GM12878 (cell line): ENCODE measurements at regions of chr1 and their contacts with region 1.

Region 1: GRCh38 chr1:113898241-113898814 is 6.3 kb downstream of the AP4B1 start:
- DNase-seq: no peak
- ATAC-seq: no peak; the same call in 2 of the 3 replicates
- H3K4me3 ChIP-seq: no peak overlapping the region
- H3K27ac ChIP-seq: no peak overlapping the region
- H3K4me1 ChIP-seq: no peaks in the 10 kb centered on the region
- H3K27me3 ChIP-seq: no peaks in the 10 kb centered on the region
- CTCF ChIP-seq: no peak
- EP300 ChIP-seq: no peak
- POLR2A ChIP-seq: no peak
- RAD21 ChIP-seq: no peak

Region 2: DNA sequence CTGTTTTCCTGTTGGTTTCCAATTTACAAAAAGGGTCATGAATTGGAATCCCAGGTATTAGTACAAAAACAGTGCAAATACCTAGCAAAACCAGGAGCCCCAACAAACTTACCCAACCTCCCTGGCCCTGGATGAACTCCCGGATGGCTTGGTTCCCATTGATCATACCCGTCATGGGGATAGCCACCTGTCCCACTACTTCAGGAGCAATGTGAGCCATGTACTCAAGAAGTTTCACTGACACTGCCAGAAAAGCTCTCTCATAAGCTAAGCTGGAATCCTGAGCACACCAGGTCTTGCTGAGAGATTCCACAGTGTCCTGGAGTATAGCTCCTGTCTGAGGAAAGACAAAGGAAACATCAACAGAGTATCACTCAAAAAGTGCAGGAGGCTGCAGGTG is 16.7 kb before region 1 on chr1:
- CTCF ChIA-PET with region 1: interaction called, 51 read pairs
- POLR2A ChIA-PET with region 1: interaction called, 29 read pairs
- RAD21 ChIA-PET with region 1: interaction called, 94 read pairs
- SMC1A ChIA-PET with region 1: interaction called, 205 read pairs
- in situ Hi-C with region 1: no loop called
- intact Hi-C with region 1: no loop called
- DNase-seq: no peak
- ATAC-seq: no peak
- H3K4me3 ChIP-seq: no peak overlapping the region
- H3K27ac ChIP-seq: peak overlapping the region; percentile 40
- H3K4me1 ChIP-seq: peaks cover 28% of the 10 kb centered on the region
- H3K27me3 ChIP-seq: no peaks in the 10 kb centered on the region
- CTCF ChIP-seq: no peak
- EP300 ChIP-seq: no peak
- POLR2A ChIP-seq: no peak
- RAD21 ChIP-seq: no peak

Region 3: DNA sequence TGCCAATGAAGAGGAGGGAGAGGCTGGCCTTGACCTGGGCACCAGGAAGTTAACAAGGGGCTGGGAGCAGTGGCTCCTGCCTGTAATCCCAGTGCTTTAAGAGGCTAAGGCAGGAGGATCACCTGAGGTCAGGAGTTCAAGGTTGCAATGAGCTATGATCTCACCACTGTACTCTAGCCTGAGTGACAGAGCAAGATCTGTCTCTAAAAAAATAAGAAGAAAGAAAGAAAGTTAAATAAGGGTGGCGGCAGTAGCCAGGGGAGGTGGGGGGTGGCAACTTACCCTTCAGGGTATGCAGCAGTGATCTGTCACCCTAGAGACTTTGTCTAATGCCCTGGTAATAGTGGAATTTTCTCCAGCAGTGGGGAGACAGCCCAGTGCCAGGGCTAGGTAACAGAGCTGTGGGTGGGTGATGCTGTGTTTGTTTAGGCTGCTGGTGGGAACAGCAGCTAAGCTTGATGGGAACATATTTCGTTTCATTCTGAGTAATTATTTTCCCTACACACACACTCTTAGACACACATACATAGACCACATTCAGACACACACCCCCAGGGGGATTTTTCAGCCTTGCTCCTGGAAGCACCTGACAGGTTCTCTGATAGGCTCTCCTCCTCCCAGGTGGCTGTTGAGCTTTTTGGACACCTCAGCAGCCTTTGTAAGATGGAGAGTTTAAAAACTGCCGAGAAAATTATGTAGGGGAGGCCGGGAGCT is 266.7 kb after region 1 on chr1:
- CTCF ChIA-PET with region 1: no interaction called
- POLR2A ChIA-PET with region 1: no interaction called
- RAD21 ChIA-PET with region 1: no interaction called
- SMC1A ChIA-PET with region 1: no interaction called
- in situ Hi-C with region 1: no loop called
- intact Hi-C with region 1: no loop called
- DNase-seq: peak; percentile 20
- ATAC-seq: peak; percentile 36; the same call in 2 of the 3 replicates
- H3K4me3 ChIP-seq: no peak overlapping the region
- H3K27ac ChIP-seq: no peak overlapping the region
- H3K4me1 ChIP-seq: peaks cover 3% of the 10 kb centered on the region; the same call in 1 of the 2 replicates
- H3K27me3 ChIP-seq: no peaks in the 10 kb centered on the region
- CTCF ChIP-seq: no peak
- EP300 ChIP-seq: no peak
- POLR2A ChIP-seq: no peak
- RAD21 ChIP-seq: no peak